Naive thymus-derived CD4-positive, alpha-beta T cell (primary cell): ENCODE measurements at regions of chr2 and their contacts with region 1.

Region 1: DNA sequence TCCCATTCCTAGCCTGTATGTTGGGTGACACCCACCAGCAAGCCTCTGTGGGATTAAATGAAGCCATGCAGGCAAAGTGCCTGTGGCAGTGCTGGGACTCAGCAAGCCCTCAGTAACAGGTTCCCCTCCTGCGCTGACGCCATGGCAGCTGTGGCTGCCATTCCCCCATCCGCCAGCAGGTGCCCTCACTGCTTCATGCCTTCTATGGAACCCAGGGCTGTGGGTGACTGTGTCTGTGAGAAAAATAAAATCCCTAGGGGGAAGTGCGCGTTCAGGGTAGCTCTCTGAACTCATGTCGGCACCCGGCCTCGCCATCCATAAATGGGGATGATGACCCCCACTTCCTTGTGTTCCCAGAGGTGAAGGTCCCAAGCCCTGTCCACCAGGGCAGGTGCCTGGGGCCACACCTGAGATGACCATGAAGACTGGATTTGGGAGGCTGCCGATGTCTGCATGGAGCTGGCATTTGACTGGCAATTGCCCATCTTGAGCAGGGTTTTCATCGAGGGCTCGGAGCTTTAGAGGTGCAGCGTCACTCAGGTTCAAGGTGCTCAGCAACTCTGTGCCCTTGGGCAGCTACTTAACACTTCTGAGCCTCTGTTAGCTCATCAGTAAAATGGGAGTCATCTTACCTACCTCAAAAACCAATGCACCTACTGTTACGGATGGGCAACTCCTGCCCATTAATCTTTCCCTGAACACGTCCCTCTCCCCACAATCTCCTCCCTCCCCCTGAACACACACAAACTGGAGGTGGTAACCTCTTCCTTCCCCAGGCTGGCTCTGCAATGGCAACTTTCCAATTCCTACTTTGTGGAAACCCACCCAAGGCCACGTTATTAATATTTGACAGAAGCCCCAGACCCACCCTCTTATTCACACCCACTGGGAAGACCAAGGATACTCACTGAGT is 2.9 kb upstream of the MAL start:
- DNase-seq: peak; percentile 69 to 90 (median 83)
- ATAC-seq: peak; percentile 78
- H3K4me3 ChIP-seq: peak overlapping the region; percentile 39
- H3K4me3 Mint-ChIP-seq: peak overlapping the region; percentile 77 to 100 (median 86)
- H3K27ac ChIP-seq: peak overlapping the region; percentile 49
- H3K27ac Mint-ChIP-seq: peak overlapping the region; percentile 81 to 100 (median 95)
- H3K4me1 ChIP-seq: peaks cover 9 to 26% of the 10 kb centered on the region in 2 donors
- H3K4me1 Mint-ChIP-seq: peaks cover 23 to 66% (median 60%) of the 10 kb centered on the region in 7 donors
- H3K27me3 ChIP-seq: no peaks in the 10 kb centered on the region
- H3K27me3 Mint-ChIP-seq: peaks cover 0 to 14% (median 0%) of the 10 kb centered on the region in 5 donors

Region 2: GRCh38 chr2:95034221-95034620 is 11.7 kb after region 1 on chr2:
- CTCF ChIA-PET with region 1: interaction called, 12 read pairs
- POLR2A ChIA-PET with region 1: interaction called, 49 read pairs
- intact Hi-C with region 1: no loop called
- DNase-seq: no peak
- ATAC-seq: no peak
- H3K4me3 ChIP-seq: no peak overlapping the region
- H3K4me3 Mint-ChIP-seq: peak overlapping the region in 6 of 10 donors; percentile 22 to 74 (median 50)
- H3K27ac ChIP-seq: peak overlapping the region; percentile 59
- H3K27ac Mint-ChIP-seq: peak overlapping the region in 8 of 9 donors; percentile 49 to 98 (median 86)
- H3K4me1 ChIP-seq: peaks cover 0 to 86% of the 10 kb centered on the region in 2 donors
- H3K4me1 Mint-ChIP-seq: peaks cover 52 to 99% (median 94%) of the 10 kb centered on the region in 7 donors
- H3K27me3 ChIP-seq: no peaks in the 10 kb centered on the region
- H3K27me3 Mint-ChIP-seq: no peaks in the 10 kb centered on the region

Region 3: DNA sequence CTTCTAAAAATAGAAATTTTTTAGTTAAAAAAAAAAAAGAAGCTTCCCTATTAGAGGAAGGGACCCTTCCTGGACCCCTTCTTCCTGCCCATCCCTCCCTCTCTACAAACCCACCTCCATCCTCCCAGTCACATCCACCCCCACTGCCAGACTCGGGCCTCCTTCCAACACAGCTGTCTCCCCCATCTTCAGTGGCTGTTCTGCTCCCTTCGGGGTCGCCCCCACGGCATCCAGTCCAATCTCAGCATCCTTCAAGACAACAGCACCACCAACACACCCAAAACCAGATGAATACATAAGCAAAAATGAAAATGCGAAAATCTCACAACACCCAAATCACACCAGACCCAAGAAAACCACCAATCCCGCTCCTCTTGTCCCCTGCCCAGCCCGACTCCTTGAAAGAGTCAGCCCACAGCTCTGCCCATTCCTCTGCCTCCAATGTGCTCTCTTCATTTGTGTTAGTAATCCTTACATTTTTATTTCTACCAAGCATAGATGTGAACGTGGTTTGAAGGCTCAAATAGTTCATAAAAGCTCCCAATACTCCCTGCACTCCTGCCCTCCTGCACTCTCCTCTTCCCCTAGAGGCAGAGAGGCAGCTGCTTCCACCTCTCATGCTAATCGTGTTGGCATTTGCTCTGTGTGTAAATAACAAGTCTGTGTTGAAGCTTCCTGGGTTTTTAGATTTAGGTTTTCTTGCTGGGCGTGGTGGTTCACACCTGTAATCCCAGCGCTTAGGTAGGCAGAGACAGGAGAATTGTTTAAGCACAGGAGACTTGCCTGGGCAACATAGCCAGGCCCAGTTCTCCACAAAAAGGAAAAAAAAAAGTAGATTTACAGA is 39.9 kb after region 1 on chr2:
- CTCF ChIA-PET with region 1: interaction called, 30 read pairs
- POLR2A ChIA-PET with region 1: interaction called, 380 read pairs
- intact Hi-C with region 1: no loop called
- DNase-seq: no peak
- ATAC-seq: no peak
- H3K4me3 ChIP-seq: peak overlapping the region; percentile 8
- H3K4me3 Mint-ChIP-seq: peak overlapping the region; percentile 42 to 81 (median 78)
- H3K27ac ChIP-seq: peak overlapping the region; percentile 68
- H3K27ac Mint-ChIP-seq: peak overlapping the region; percentile 84 to 95 (median 90)
- H3K4me1 ChIP-seq: peaks cover 0 to 24% of the 10 kb centered on the region in 2 donors
- H3K4me1 Mint-ChIP-seq: peaks cover 24 to 58% (median 50%) of the 10 kb centered on the region in 7 donors
- H3K27me3 ChIP-seq: no peaks in the 10 kb centered on the region
- H3K27me3 Mint-ChIP-seq: no peaks in the 10 kb centered on the region

Region 4: GRCh38 chr2:95115418-95115817 is 92.9 kb after region 1 on chr2:
- CTCF ChIA-PET with region 1: interaction called, 116 read pairs
- POLR2A ChIA-PET with region 1: interaction called, 137 read pairs
- intact Hi-C with region 1: loop called (anchors 1 kb)
- DNase-seq: peak; percentile 41 to 78 (median 72)
- ATAC-seq: peak; percentile 98
- H3K4me3 ChIP-seq: no peak overlapping the region
- H3K4me3 Mint-ChIP-seq: no peak overlapping the region
- H3K27ac ChIP-seq: no peak overlapping the region
- H3K27ac Mint-ChIP-seq: peak overlapping the region in 5 of 9 donors; percentile 18 to 76 (median 52)
- H3K4me1 ChIP-seq: peaks cover 16 to 29% of the 10 kb centered on the region in 2 donors
- H3K4me1 Mint-ChIP-seq: peaks cover 37 to 50% (median 43%) of the 10 kb centered on the region in 7 donors
- H3K27me3 ChIP-seq: no peaks in the 10 kb centered on the region
- H3K27me3 Mint-ChIP-seq: no peaks in the 10 kb centered on the region

Region 5: GRCh38 chr2:95171902-95172301 is 149.3 kb after region 1 on chr2:
- CTCF ChIA-PET with region 1: no interaction called
- POLR2A ChIA-PET with region 1: no interaction called
- intact Hi-C with region 1: no loop called
- DNase-seq: no peak
- ATAC-seq: no peak
- H3K4me3 ChIP-seq: no peak overlapping the region
- H3K4me3 Mint-ChIP-seq: no peak overlapping the region
- H3K27ac ChIP-seq: no peak overlapping the region
- H3K27ac Mint-ChIP-seq: peak overlapping the region in 1 of 9 donors; percentile 7
- H3K4me1 ChIP-seq: no peaks in the 10 kb centered on the region
- H3K4me1 Mint-ChIP-seq: peaks cover 4 to 29% (median 17%) of the 10 kb centered on the region in 7 donors
- H3K27me3 ChIP-seq: no peaks in the 10 kb centered on the region
- H3K27me3 Mint-ChIP-seq: no peaks in the 10 kb centered on the region

Region 6: GRCh38 chr2:95207111-95207961 is 184.8 kb after region 1 on chr2 and contains the start of gene ZNF892:
- CTCF ChIA-PET with region 1: no interaction called
- POLR2A ChIA-PET with region 1: no interaction called
- intact Hi-C with region 1: loop called (anchors 1 kb)
- DNase-seq: peak; percentile 50 to 83 (median 63)
- ATAC-seq: peak; percentile 95
- H3K4me3 ChIP-seq: peak within 1 kb of the TSS; percentile 89
- H3K4me3 Mint-ChIP-seq: peak within 1 kb of the TSS; percentile 92 to 96 (median 94)
- H3K27ac ChIP-seq: peak within 1 kb of the TSS; percentile 85
- H3K27ac Mint-ChIP-seq: peak within 1 kb of the TSS; percentile 75 to 89 (median 81)
- H3K4me1 ChIP-seq: peaks cover 7 to 9% of the 10 kb centered on the region in 2 donors
- H3K4me1 Mint-ChIP-seq: peaks cover 17 to 37% (median 27%) of the 10 kb centered on the region in 7 donors
- H3K27me3 ChIP-seq: no peaks in the 10 kb centered on the region
- H3K27me3 Mint-ChIP-seq: no peaks in the 10 kb centered on the region
- total RNA-seq, gene ZNF892: 1.7 to 6.4 (median 4.3) TPM